GM12878 (cell line): ENCODE measurements at regions of chr4 and their contacts with region 1.

Region 1: DNA sequence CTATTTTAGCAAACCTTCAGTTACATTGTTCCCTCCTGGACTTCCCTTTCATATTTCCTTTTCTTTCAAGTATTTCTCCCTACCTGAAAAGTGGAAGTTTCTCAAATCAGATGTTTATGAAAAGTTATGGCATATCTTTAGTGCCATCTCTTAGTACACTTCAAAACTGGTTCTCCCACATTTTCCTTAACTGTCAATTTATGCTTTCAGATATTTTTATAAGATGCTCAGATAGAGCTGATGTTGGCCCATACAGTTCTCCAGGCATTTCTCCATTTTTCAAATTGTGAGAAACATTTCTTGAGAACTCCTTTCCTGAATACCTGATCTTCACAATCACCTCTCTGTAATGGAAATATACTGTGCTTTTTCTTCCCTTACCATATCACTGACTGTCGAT is 32.5 kb upstream of the AP1AR start:
- DNase-seq: no peak
- ATAC-seq: no peak
- H3K4me3 ChIP-seq: no peak overlapping the region
- H3K27ac ChIP-seq: no peak overlapping the region
- H3K4me1 ChIP-seq: peaks cover 8% of the 10 kb centered on the region; the same call in 1 of the 2 replicates
- H3K27me3 ChIP-seq: no peaks in the 10 kb centered on the region; a peak in 2 of 4 replicates
- CTCF ChIP-seq: no peak
- EP300 ChIP-seq: no peak
- POLR2A ChIP-seq: no peak
- RAD21 ChIP-seq: no peak

Region 2: DNA sequence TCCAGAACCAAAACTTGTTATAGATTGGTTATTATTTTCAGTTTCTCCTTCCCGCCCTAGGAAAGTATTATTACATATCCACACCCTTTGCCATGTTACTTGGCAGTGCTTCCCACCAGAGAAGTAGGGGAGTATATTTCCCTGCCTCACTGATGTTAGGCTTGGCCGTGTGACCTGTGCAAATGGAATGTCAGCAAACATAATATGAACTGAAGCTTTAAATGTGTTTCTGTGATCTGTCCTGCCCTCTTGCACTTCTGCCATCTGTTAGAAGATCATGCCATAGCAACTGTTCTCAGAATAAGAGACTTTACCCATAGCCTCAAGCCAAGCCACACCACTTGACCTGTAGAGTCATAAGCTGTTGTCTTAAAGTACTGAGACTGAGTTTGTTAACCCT is 353.6 kb after region 1 on chr4:
- CTCF ChIA-PET with region 1: no interaction called
- POLR2A ChIA-PET with region 1: interaction called, 10 read pairs
- RAD21 ChIA-PET with region 1: no interaction called
- SMC1A ChIA-PET with region 1: no interaction called
- in situ Hi-C with region 1: no loop called
- intact Hi-C with region 1: no loop called
- DNase-seq: no peak
- ATAC-seq: no peak
- H3K4me3 ChIP-seq: no peak overlapping the region
- H3K27ac ChIP-seq: no peak overlapping the region
- H3K4me1 ChIP-seq: no peaks in the 10 kb centered on the region
- H3K27me3 ChIP-seq: no peaks in the 10 kb centered on the region
- CTCF ChIP-seq: no peak
- EP300 ChIP-seq: no peak
- POLR2A ChIP-seq: no peak
- RAD21 ChIP-seq: no peak